ENCODE measurements at regions of chr4 and their contacts with region 1.

Region 1: DNA sequence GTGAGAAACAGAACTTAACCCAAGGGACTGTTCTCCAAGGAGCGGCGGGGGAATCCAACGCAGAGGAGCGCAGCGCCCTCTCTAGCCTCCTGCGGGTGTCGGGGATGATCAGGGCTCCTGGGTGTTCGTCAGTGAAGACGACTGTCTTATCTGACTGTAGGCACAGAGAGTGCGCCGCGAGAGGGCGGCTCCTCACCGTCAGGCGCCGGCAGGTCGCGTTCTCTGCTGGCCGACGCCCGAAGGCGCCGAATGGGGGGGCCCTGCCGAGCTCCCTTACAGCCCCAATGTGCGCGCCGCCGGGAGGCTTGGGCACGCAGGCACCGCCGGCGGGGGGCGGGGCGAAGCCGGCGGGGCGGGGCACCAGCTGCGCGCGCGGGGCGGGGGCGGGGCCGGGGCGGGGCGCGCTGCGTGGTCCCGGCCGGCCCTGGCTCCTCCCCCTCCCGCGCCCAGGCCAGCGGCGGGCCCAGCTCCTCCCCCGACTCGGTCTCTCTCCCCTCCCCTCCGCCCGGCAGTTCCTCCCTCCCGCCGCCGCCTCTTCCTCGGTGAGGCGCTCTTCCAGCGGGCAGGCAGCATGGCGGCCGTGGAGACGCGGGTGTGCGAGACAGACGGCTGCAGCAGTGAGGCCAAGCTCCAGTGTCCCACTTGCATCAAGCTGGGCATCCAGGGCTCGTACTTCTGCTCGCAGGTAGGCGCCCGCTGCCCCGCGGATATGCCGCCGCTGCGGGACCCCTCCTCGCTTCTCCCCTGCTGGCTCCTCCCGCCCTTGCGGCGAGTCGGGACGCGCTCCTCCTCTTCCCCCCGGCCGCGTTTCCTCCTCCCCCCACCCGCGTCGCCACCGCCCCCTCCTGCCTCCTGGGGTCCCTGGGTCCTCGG is at the start of gene METAP1:
- DNase-seq: peak; percentile 94
- H3K4me3 Mint-ChIP-seq: peak within 1 kb of the TSS; percentile 91
- H3K27ac Mint-ChIP-seq: peak within 1 kb of the TSS; percentile 99
- H3K4me1 Mint-ChIP-seq: peaks cover 26% of the 10 kb centered on the region
- H3K27me3 Mint-ChIP-seq: no peaks in the 10 kb centered on the region
- total RNA-seq, gene METAP1: 58.2 and 58.7 TPM in 2 replicates

Region 2: DNA sequence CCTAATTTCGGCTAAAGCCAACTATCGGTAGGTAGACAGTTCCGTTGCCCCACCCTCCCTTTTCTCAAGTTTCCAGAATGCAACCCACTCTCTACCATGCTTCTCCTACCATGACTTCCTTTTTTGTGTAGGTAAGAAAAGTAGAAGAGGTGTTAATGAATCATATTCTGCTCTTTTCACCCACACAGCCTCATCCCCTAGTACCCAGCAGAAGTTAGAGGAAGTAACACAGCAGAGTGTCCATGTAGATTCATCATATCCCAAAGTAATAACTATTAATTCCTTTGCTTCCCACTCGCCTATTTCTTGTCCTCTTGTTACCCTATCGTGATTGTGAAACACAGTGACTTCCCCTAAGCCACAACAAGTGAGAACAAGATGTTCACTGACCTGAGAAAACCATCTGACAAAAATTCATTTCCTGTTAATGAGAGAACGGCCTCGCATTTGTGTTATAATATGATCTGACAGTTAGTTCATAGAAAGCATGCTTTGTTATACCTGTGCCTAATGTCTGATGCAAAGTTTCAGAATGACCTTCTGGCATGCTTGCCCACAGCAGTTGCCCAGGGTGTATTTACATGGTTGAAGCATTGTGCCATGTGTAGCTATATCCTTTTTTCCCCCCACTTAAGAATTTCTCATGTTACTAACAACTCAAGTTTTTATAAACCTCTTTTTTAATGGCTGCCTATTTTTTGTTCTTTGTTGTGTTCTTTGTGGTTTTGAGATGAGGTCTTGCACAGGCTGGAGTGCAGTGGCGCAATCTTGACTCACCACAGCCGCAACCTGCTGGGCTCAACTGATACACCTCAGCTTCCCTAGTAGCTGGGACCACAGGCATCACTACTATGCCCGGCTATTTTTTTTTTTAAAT is 548.7 kb before region 1 on chr4:
- intact Hi-C with region 1: loop called (anchors 10 kb)
- DNase-seq: peak; percentile 60
- H3K4me3 Mint-ChIP-seq: peak overlapping the region; percentile 63
- H3K27ac Mint-ChIP-seq: peak overlapping the region; percentile 92
- H3K4me1 Mint-ChIP-seq: peaks cover 42% of the 10 kb centered on the region
- H3K27me3 Mint-ChIP-seq: no peaks in the 10 kb centered on the region

Region 3: DNA sequence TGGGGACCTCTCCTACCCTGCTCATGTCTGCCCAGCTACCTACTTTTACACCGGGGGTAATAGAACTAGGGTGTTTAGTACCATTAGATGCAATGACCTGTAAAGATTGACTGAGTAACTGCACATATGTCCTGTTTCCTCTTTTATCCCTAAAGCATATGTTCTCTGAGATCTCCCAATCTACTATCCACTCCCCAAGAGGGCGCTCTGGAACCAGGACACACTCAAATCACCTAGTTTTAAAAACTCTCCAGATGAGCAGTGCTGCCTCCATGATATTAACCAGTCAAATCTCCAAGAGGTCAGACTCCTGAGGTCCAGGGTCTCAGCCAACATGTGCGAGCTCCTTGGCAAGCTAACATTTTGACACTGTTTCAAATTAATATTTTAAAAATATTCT is 250.1 kb before region 1 on chr4:
- intact Hi-C with region 1: no loop called
- DNase-seq: no peak
- H3K4me3 Mint-ChIP-seq: no peak overlapping the region
- H3K27ac Mint-ChIP-seq: no peak overlapping the region
- H3K4me1 Mint-ChIP-seq: peaks cover 6% of the 10 kb centered on the region
- H3K27me3 Mint-ChIP-seq: no peaks in the 10 kb centered on the region

Region 4: GRCh38 chr4:98976694-98977310 is 18.6 kb before region 1 on chr4:
- intact Hi-C with region 1: no loop called
- DNase-seq: no peak
- H3K4me3 Mint-ChIP-seq: no peak overlapping the region
- H3K27ac Mint-ChIP-seq: no peak overlapping the region
- H3K4me1 Mint-ChIP-seq: no peaks in the 10 kb centered on the region
- H3K27me3 Mint-ChIP-seq: peaks cover 13% of the 10 kb centered on the region

Region 5: DNA sequence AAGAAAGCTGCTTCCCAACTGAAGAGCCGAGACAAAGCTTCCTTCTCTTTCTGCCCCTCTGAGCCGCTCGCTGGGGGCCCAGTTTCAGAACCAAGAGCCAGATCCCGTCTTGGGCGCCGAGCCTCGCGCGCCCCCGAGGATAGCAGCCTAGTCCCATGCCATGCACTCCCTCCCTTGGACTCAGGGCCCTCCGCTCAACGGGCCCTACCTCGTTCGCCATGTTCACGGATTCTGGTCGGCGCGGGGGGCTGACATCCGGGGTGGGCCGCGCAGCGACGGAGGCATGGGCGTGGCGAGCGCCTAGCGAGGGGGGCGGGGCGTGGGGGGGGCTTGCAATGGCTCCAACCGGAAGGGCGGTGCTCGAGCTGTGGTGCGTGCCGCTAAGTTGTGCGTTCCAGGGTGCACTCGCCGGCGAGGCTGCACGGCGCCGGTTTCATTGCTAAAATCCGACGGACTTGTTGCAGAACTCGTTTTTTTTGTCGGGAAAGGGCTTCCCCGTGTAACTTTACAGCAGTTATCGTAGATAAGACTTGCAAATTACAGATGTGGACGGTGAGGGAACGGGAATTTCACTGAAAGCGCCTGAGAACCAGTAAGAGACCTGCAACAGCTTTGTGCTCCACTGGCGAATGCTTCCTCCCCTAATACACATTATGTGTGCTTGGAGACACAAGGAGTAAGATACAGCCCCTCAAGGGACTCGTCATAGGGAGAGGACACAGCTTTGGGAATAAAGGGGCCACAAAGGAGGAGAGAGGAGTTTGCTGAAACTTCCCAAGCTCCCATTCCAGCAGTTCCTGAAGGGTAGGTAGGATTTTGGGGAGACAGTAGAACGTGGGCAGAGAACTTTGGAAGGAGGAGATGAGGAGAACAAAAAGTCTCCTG is 93.3 kb after region 1 on chr4 and contains the start of gene ADH5:
- intact Hi-C with region 1: loop called (anchors 1 kb)
- DNase-seq: peak; percentile 80
- H3K4me3 Mint-ChIP-seq: peak within 1 kb of the TSS; percentile 95
- H3K27ac Mint-ChIP-seq: peak within 1 kb of the TSS; percentile 92
- H3K4me1 Mint-ChIP-seq: peaks cover 26% of the 10 kb centered on the region
- H3K27me3 Mint-ChIP-seq: peaks cover 4% of the 10 kb centered on the region
- total RNA-seq, gene ADH5: 93.8 and 98.6 TPM in 2 replicates

Region 6: GRCh38 chr4:99201690-99202089 is 206.3 kb after region 1 on chr4:
- intact Hi-C with region 1: no loop called
- DNase-seq: no peak
- H3K4me3 Mint-ChIP-seq: no peak overlapping the region
- H3K27ac Mint-ChIP-seq: no peak overlapping the region
- H3K4me1 Mint-ChIP-seq: no peaks in the 10 kb centered on the region
- H3K27me3 Mint-ChIP-seq: no peaks in the 10 kb centered on the region

Region 7: GRCh38 chr4:99462875-99463464 is 467.6 kb after region 1 on chr4:
- intact Hi-C with region 1: loop called (anchors 10 kb)
- DNase-seq: peak; percentile 23
- H3K4me3 Mint-ChIP-seq: no peak overlapping the region
- H3K27ac Mint-ChIP-seq: no peak overlapping the region
- H3K4me1 Mint-ChIP-seq: no peaks in the 10 kb centered on the region
- H3K27me3 Mint-ChIP-seq: peaks cover 29% of the 10 kb centered on the region